Heart left ventricle (tissue), 16 donors: ENCODE measurements at regions of chr20 and their contacts with region 1.

Region 1: GRCh38 chr20:9407805-9408421 is 106.5 kb upstream of the LAMP5 start:
- DNase-seq: peak in 3 of 5 donors; percentile 32 to 47 (median 33)
- ATAC-seq: peak in 3 of 4 donors; percentile 81 to 82 (median 81)
- H3K4me3 ChIP-seq: no peak overlapping the region
- H3K27ac ChIP-seq: no peak overlapping the region
- H3K4me1 ChIP-seq: peaks cover 0 to 7% (median 0%) of the 10 kb centered on the region in 12 donors
- H3K27me3 ChIP-seq: no peaks in the 10 kb centered on the region
- CTCF ChIP-seq: peak; percentile 70 to 90 (median 84)
- POLR2A ChIP-seq: no peak

Region 2: DNA sequence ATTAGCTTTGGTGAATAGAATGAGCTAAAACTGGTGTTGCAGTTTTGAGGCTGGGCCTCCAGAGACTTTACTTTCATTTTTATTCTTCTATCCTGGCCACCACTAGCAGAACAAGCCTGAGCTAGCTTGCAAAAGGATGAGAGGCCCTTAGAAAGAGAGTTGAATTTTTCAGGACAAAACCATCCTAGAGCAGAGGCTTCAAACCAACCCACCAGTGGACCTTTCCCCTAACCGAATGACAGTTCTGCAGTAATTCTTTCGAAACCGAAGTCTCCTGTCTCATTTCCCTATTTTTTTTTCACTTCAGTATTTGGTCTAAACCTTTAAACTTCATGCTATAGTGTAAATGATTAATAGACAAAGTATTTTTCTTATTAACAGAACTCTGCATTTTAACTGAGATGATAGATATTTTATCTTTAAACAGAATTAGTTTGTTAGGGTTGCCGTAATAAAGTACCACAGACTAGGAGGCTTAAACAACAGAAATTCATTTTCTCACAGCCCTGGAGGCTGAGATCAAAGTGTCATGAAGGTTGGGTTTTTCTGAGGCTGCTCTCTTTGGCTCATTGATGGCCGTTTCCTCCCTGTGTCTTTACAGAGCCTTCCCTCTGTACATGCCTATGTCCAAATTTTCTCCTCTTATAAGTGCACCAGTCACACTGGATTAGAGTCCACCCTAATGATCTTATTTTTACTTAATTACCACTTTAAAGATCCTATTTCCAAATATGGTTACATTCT is 511.5 kb after region 1 on chr20:
- intact Hi-C with region 1: loop called in 1 of 10 experiments (anchors 5 kb)
- DNase-seq: no peak
- ATAC-seq: no peak
- H3K4me3 ChIP-seq: no peak overlapping the region
- H3K27ac ChIP-seq: no peak overlapping the region
- H3K4me1 ChIP-seq: no peaks in the 10 kb centered on the region
- H3K27me3 ChIP-seq: no peaks in the 10 kb centered on the region
- CTCF ChIP-seq: no peak
- POLR2A ChIP-seq: no peak